Heart right ventricle (tissue), 16 donors: ENCODE measurements at regions of chr10 and their contacts with region 1.

Region 1: DNA sequence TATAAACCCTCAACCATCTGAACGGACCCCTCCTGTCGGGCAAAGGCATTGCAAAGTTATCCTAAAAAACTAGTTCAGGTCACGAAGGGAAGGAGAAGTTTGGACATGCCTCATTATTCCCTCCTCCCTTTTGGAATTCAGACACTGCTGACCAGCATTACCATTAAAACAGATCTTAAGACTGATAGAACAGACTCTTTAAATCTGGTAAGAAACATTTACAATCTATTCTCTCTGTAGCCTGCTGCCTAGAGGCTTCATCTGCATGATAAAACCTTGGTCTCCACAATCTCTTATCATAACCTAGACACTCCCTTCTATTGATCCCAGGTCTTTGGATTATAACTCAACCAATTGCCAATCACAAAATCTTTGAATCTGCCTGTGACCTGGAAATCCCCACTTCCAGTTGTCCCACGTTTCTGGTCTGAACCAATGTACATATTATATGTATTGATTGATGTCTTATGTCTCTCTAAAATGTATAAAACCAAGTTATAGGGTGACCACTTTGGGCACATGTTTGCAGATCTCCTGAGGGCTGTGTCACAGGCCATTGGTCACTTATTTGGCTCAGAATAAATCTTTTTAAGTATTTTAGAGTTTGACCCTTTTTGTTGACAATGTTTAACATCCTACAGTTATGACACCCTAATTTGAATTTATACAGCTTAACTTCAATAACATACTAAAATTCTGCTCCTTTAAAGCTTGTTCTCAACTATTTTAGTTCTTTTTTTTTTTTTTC is 23.5 kb upstream of the CNNM2 start:
- DNase-seq: no peak
- ATAC-seq: no peak
- H3K4me3 ChIP-seq: no peak overlapping the region
- H3K27ac ChIP-seq: no peak overlapping the region
- H3K4me1 ChIP-seq: no peaks in the 10 kb centered on the region
- H3K27me3 ChIP-seq: no peaks in the 10 kb centered on the region
- CTCF ChIP-seq: no peak

Region 2: DNA sequence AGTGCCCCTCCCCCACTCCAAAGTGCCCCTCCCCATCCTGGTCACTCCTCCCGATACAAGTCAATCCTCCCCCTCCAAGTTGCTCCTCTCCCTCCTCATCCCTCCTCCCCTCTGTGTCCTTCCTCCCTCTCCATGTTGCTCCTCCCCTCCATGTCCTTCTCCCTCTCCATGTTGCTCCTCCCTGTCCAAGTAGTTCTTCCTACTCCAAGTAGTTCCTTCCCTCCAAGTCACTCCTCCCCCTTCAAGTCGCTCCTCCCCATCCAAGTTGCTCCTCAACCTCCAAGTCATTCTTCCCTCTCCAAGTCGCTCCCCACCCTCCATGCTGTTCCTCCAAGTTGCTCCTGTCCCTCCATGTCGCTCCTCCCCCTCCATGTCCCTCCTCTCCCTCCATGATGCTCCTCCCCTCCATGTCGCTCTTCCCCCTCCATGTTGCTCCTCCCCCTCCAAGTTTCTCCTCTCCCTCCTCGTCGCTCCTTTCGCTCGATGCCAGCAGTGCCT is 159.5 kb before region 1 on chr10:
- intact Hi-C with region 1: loop called in 1 of 10 experiments (anchors 2 kb)
- DNase-seq: no peak
- ATAC-seq: peak in 7 of 8 donors; percentile 6 to 68 (median 37)
- H3K4me3 ChIP-seq: no peak overlapping the region
- H3K27ac ChIP-seq: no peak overlapping the region
- H3K4me1 ChIP-seq: peaks cover 0 to 19% (median 4%) of the 10 kb centered on the region in 9 donors
- H3K27me3 ChIP-seq: no peaks in the 10 kb centered on the region
- CTCF ChIP-seq: no peak

Region 3: GRCh38 chr10:102927311-102928010 is 32.8 kb after region 1 on chr10:
- intact Hi-C with region 1: no loop called
- DNase-seq: no peak
- ATAC-seq: no peak
- H3K4me3 ChIP-seq: no peak overlapping the region
- H3K27ac ChIP-seq: no peak overlapping the region
- H3K4me1 ChIP-seq: peaks cover 0 to 17% (median 11%) of the 10 kb centered on the region in 9 donors
- H3K27me3 ChIP-seq: no peaks in the 10 kb centered on the region
- CTCF ChIP-seq: no peak